Common myeloid progenitor, CD34-positive (primary cell): ENCODE measurements at regions of chr9 and their contacts with region 1.

Region 1: GRCh38 chr9:9790216-9790872 is 822.5 kb downstream of the PTPRD start:
- DNase-seq: peak; percentile 47 to 68 (median 62)
- H3K4me3 ChIP-seq: no peak overlapping the region
- H3K27ac ChIP-seq: no peak overlapping the region
- H3K4me1 ChIP-seq: peaks cover 0 to 8% (median 5%) of the 10 kb centered on the region in 4 experiments
- H3K27me3 ChIP-seq: no peaks in the 10 kb centered on the region

Region 2: GRCh38 chr9:9603345-9603744 is 187.0 kb before region 1 on chr9:
- CTCF ChIA-PET with region 1: interaction called, 63 read pairs
- POLR2A ChIA-PET with region 1: no interaction called
- DNase-seq: no peak
- H3K4me3 ChIP-seq: no peak overlapping the region
- H3K27ac ChIP-seq: no peak overlapping the region
- H3K4me1 ChIP-seq: peaks cover 0 to 1% (median 0%) of the 10 kb centered on the region in 4 experiments
- H3K27me3 ChIP-seq: no peaks in the 10 kb centered on the region

Region 3: DNA sequence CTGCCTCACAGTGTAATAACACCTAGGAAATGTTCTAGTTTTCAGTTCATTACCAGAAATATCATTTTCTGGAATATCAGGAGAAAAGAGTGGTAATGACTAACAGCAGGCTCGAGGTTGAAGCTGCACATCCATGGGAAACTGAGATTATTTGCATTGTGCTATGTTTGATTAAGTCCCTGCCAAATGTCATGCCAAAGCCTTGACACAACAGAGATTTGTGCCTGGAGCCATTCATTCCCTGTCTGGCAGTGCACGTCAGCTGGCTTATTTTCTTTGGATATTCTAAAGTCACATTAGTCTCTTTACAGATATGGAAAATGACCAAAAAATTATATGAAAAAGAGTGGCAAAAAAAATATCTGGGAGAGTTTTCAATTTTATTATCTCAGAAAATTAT is 25.5 kb before region 1 on chr9:
- CTCF ChIA-PET with region 1: no interaction called
- POLR2A ChIA-PET with region 1: no interaction called
- DNase-seq: no peak
- H3K4me3 ChIP-seq: no peak overlapping the region
- H3K27ac ChIP-seq: no peak overlapping the region
- H3K4me1 ChIP-seq: no peaks in the 10 kb centered on the region
- H3K27me3 ChIP-seq: no peaks in the 10 kb centered on the region

Region 4: DNA sequence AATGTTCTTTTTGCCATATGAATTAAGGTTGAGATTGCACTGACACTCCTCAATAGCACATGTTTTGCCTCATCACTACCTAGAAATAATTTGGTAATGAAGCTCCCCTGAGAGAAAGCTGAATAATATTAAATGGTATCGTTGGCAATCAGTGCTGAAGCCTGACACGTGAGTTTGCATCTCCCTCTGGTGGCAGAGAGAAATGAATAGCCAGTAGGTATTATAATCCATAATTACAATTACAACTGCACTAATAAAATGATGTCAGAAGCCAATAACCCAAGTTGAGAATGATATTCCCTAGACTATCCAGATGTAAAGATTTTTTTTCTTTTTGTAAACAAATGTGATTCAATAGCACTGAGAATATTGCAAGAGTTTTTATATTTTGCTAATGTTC is 122.1 kb after region 1 on chr9:
- CTCF ChIA-PET with region 1: interaction called, 21 read pairs
- POLR2A ChIA-PET with region 1: no interaction called
- DNase-seq: peak in 2 of 3 donors; percentile 36 to 47
- H3K4me3 ChIP-seq: no peak overlapping the region
- H3K27ac ChIP-seq: no peak overlapping the region
- H3K4me1 ChIP-seq: peaks cover under 1 to 13% (median 6%) of the 10 kb centered on the region in 4 experiments
- H3K27me3 ChIP-seq: no peaks in the 10 kb centered on the region

Region 5: DNA sequence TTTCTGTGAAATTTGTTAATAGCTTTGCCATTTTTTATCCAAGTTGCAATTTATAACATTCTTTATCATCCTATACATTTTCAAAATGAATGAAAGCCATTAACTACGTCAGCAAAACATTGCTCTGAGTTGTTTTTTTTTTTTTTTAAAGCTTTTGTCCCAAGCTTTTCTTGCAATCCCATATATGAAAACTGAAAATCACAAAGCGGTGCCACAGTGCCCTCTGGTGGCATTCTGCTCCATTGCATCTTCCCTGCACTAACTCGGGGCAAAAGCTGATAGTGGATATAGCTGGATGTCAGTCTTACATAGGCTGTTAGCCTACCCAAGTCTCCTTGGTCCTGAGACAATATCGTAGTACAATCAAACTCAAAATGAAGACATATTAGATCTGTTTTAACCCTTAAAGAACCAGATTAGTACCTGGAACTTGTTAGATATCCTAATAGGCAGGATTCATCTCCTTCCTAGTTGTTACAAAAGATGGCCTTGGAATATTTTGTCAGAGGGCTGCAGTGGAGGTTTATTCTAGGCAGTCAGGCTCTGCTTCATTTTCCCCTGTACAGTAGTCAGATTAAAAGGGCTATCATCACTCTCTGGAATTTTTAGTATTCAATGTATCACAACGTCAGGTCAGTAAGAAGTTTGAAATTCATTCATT is 152.6 kb after region 1 on chr9:
- CTCF ChIA-PET with region 1: interaction called, 13 read pairs
- POLR2A ChIA-PET with region 1: no interaction called
- DNase-seq: peak; percentile 69 to 79 (median 69)
- H3K4me3 ChIP-seq: no peak overlapping the region
- H3K27ac ChIP-seq: no peak overlapping the region
- H3K4me1 ChIP-seq: peaks cover 0 to 3% (median 0%) of the 10 kb centered on the region in 4 experiments
- H3K27me3 ChIP-seq: no peaks in the 10 kb centered on the region